Left cardiac atrium (tissue), 4 donors: ENCODE measurements at regions of chr5 and their contacts with region 1.

Region 1: GRCh38 chr5:93677344-93678021 is 63.9 kb downstream of the POU5F2 start:
- DNase-seq: peak; percentile 44
- ATAC-seq: peak; percentile 86 to 90

Region 2: DNA sequence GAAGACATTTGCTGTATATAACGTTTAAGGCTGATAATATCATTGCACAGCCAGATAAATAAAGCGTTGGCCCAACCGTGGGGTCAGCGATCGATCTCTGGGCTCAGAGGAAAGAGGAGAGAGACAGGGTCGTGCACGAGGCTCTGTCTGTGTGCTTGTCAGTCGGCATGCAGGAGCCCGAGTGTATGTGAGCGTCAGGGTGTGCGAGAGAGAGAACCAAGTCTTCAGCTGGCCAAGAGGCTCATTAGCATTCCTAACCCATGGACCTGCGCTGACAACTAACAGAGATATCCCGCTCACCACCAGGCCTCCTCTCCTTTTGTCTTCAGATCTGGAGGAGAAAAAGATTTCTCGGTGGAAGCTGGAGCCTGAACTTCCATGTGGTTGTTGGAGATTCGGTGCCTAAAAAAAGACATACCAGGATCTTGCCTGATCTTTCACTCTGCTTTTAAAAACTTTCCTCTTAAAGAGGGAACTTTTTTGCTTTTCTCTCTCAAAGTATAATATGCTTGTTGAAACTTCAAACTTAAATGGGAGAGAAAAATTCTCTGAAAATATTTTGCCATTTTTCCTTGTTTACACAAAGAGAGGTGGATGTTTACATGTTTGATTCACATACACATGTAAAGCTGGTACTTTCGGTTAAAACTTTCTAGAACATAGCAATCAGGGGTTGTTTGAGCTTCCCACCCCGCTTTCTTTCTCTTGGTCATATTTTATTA is 77.9 kb before region 1 on chr5:
- intact Hi-C with region 1: loop called in 1 of 2 experiments (anchors 2 kb)
- DNase-seq: peak; percentile 34
- ATAC-seq: peak; percentile 58 to 60

Region 3: GRCh38 chr5:93620487-93621326 is 56.8 kb before region 1 on chr5:
- intact Hi-C with region 1: loop called in 1 of 2 experiments (anchors 5 kb)
- DNase-seq: peak; percentile 78
- ATAC-seq: peak; percentile 93 to 94